Posterior vena cava (tissue), 2 donors: ENCODE measurements at regions of chr15 and their contacts with region 1.

Region 1: DNA sequence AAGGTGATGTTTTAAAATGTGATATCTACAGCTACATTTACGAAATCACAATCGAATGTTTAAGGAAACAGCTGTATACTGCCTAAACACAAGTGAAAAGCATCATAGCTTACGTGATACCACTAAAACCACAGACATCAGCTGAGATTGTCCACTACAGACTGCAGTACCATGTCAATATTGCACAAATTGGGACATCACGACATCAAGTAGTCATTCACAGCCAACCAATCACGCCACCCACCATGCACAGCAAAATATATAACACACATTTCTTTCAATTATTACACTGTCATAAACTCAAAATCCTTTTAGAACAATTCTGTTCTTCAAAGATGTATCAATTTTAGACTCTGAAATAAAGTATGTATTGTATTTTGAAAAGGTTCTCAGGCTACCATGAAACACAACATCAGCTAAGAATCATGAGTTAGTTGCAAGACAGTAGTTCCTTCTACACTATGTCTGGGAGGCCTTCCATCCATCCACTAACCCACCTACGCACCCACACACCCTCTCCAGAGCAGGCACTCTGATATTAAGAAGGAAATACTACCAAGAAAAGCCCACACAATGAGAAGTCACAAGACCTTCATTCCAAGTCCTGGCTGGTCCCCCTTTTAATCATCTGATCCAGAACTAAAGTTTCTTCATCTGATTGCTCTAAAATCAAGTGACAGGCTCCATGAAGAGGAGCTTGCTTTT is 3.1 kb downstream of the DMXL2 start:
- DNase-seq: no peak

Region 2: GRCh38 chr15:51561271-51561670 is 58.2 kb before region 1 on chr15:
- intact Hi-C with region 1: loop called in 1 of 2 experiments (anchors 10 kb)
- DNase-seq: peak; percentile 20

Region 3: GRCh38 chr15:51649659-51650521 is 30.4 kb after region 1 on chr15:
- intact Hi-C with region 1: no loop called
- DNase-seq: no peak